ENCODE measurements at regions of chr15 and their contacts with region 1.

Region 1: DNA sequence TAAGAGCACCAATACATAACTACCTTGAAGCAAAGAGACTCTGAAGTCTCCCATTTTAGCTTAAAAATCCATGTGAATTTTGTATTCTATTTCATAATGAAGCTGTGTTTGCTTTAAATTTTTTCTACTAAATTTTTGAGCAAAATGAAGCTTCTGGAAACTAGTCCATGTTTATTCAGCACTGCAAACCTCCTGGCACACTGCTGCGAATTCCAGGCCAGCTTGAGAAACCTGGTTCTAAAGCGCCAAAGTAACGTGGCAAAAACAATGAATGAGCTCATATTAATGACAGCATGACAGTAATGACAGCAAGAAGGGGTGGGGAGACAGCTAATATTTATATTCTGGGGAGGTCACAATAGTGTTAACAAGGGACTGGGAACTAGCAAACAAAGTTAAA is 25.7 kb downstream of the CEP152 start:
- DNase-seq: no peak
- ATAC-seq: no peak
- H3K4me3 Mint-ChIP-seq: no peak overlapping the region
- H3K27ac Mint-ChIP-seq: no peak overlapping the region
- H3K4me1 Mint-ChIP-seq: peaks cover 2% of the 10 kb centered on the region
- H3K27me3 Mint-ChIP-seq: no peaks in the 10 kb centered on the region

Region 2: GRCh38 chr15:48330855-48331795 is 454.1 kb before region 1 on chr15 and contains the start of gene DUT:
- POLR2A ChIA-PET with region 1: interaction called, 10 read pairs
- DNase-seq: peak; percentile 87
- ATAC-seq: peak; percentile 87
- H3K4me3 Mint-ChIP-seq: peak within 1 kb of the TSS; percentile 100
- H3K27ac Mint-ChIP-seq: peak within 1 kb of the TSS; percentile 100
- H3K4me1 Mint-ChIP-seq: peaks cover 34% of the 10 kb centered on the region
- H3K27me3 Mint-ChIP-seq: no peaks in the 10 kb centered on the region
- total RNA-seq, gene DUT: 255 to 262 TPM

Region 3: DNA sequence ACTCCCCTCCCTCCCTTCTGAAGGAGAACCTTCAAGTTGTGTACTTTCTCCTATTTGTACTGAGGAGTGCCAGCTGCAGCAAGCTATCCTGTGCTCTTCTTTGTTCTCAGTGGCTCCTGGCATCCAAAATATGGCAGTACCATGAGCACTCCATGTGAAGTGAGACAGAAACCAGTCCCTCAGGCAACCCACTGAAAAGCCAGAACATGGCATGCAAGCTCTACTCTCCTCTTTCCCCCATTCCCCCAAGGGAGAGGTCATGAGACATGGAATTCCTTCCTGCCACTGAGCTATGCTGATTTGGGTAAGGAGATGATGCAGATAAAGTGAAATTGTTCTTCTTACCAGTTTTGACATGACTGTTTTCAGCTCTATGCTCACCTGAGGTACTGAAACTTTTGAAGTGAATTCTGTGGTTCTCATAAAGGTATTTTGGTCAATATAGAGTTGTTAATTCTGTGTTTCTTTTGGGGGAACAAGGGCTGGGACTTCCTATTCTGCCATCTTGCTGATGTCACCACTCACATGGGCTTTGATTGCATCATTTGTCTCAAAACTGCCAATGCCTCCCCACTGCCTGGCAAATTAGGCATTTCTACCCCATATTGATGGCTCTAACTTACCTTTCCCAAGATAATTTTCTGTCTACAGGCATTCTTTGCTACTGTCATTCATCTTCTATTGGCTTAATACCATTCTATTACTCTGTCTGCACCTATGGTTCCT is 48.5 kb after region 1 on chr15:
- POLR2A ChIA-PET with region 1: no interaction called
- DNase-seq: no peak
- ATAC-seq: no peak
- H3K4me3 Mint-ChIP-seq: no peak overlapping the region
- H3K27ac Mint-ChIP-seq: no peak overlapping the region
- H3K4me1 Mint-ChIP-seq: no peaks in the 10 kb centered on the region
- H3K27me3 Mint-ChIP-seq: peaks cover 22% of the 10 kb centered on the region